Natural killer cell (primary cell): ENCODE measurements at regions of chr1 and their contacts with region 1.

Region 1: GRCh38 chr1:214584805-214585766 is 17.9 kb upstream of the CENPF start:
- DNase-seq: no peak
- ATAC-seq: peak in 2 of 3 donors; percentile 29 to 38
- H3K4me3 ChIP-seq: no peak overlapping the region
- H3K4me3 Mint-ChIP-seq: no peak overlapping the region
- H3K27ac ChIP-seq: no peak overlapping the region
- H3K27ac Mint-ChIP-seq: no peak overlapping the region
- H3K4me1 ChIP-seq: no peaks in the 10 kb centered on the region
- H3K4me1 Mint-ChIP-seq: no peaks in the 10 kb centered on the region
- H3K27me3 ChIP-seq: no peaks in the 10 kb centered on the region
- H3K27me3 Mint-ChIP-seq: peaks cover 0 to 8% of the 10 kb centered on the region in 2 donors
- CTCF ChIP-seq: peak; percentile 40

Region 2: DNA sequence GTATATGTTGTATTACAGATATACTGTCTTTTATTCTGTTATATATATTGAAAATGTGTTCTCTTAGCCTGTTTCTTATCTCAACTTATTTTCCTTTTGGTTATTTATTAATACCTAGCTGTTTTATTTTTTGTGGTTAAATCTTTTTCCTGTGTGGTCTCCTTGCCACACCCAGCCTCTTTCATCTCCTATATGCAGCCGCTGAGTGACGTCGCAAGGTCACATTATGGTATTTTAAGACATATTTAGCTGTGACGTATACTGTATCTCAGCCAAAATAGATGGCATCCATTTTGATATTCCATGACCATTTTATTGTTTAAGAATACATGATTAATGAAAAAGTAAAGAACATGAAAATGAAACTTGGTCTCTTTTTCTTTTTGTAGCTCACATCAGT is 47.0 kb after region 1 on chr1:
- intact Hi-C with region 1: loop called (anchors 1 kb)
- DNase-seq: peak in 1 of 2 donors; percentile 80
- ATAC-seq: no peak
- H3K4me3 ChIP-seq: no peak overlapping the region
- H3K4me3 Mint-ChIP-seq: no peak overlapping the region
- H3K27ac ChIP-seq: no peak overlapping the region
- H3K27ac Mint-ChIP-seq: peak overlapping the region in 1 of 2 donors; percentile 32
- H3K4me1 ChIP-seq: no peaks in the 10 kb centered on the region
- H3K4me1 Mint-ChIP-seq: peaks cover 7 to 8% of the 10 kb centered on the region in 2 donors
- H3K27me3 ChIP-seq: no peaks in the 10 kb centered on the region
- H3K27me3 Mint-ChIP-seq: no peaks in the 10 kb centered on the region
- CTCF ChIP-seq: no peak